B cell (primary cell): ENCODE measurements at regions of chr4 and their contacts with region 1.

Region 1: DNA sequence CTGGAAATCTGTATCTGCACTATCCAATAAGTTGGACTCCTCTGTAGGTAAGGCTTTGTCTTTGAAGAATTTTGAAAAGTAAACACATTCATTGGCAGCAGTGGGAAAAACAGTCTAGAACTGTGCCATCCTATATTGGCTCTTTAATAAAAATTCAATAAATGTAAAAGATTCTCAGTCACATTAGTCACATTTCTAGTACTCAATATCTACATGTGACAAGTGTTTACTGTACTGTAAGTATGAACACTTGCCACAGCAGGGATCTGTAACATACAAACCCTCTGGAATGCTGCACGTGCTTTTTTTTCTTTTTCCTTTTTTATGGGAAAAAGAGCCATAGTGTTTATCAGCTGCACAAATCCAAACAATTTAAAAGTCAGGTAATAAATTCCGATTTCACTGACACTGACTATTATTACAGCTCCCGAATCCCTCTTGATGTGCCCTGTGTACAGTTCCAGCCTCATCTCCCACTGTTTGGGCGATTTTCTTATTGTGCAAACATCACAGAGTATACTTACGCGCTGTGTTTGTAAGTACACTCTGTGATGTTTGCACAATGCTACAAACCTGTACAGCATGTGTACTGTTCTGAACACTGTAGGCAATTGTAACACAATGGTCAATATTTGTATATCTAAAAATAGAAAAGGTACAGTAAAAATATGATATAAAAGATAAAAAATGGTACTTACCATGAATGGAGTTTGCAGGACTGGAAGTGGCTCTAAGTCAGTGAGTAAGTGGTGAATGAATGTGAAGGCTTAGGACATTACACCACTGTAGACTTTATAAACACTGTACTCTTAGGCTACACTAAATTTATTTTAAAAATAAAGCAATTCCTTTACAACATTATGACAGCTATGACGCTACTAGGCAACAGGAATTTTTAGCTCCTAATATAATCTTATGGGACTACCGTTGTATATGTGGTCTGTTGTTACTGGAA is 8.7 kb downstream of the PYURF start:
- DNase-seq: no peak
- ATAC-seq: no peak
- H3K4me3 ChIP-seq: no peak overlapping the region
- H3K4me3 Mint-ChIP-seq: no peak overlapping the region
- H3K27ac ChIP-seq: no peak overlapping the region
- H3K27ac Mint-ChIP-seq: no peak overlapping the region
- H3K4me1 ChIP-seq: no peaks in the 10 kb centered on the region
- H3K4me1 Mint-ChIP-seq: no peaks in the 10 kb centered on the region
- H3K27me3 ChIP-seq: no peaks in the 10 kb centered on the region
- H3K27me3 Mint-ChIP-seq: peaks cover 3% of the 10 kb centered on the region
- CTCF ChIP-seq: no peak

Region 2: GRCh38 chr4:87679449-87680169 is 835.2 kb before region 1 on chr4:
- CTCF ChIA-PET with region 1: interaction called, 3 read pairs
- POLR2A ChIA-PET with region 1: no interaction called
- intact Hi-C with region 1: loop called (anchors 5 kb)
- DNase-seq: peak; percentile 41
- ATAC-seq: no peak
- H3K4me3 ChIP-seq: no peak overlapping the region
- H3K4me3 Mint-ChIP-seq: no peak overlapping the region
- H3K27ac ChIP-seq: no peak overlapping the region
- H3K27ac Mint-ChIP-seq: no peak overlapping the region
- H3K4me1 ChIP-seq: no peaks in the 10 kb centered on the region
- H3K4me1 Mint-ChIP-seq: peaks cover 2% of the 10 kb centered on the region
- H3K27me3 ChIP-seq: no peaks in the 10 kb centered on the region
- H3K27me3 Mint-ChIP-seq: no peaks in the 10 kb centered on the region
- CTCF ChIP-seq: peak; percentile 86

Region 3: GRCh38 chr4:88033309-88033708 is 481.5 kb before region 1 on chr4:
- CTCF ChIA-PET with region 1: interaction called, 40 read pairs
- POLR2A ChIA-PET with region 1: no interaction called
- intact Hi-C with region 1: loop called (anchors 1 kb)
- DNase-seq: peak; percentile 64
- ATAC-seq: peak; percentile 43
- H3K4me3 ChIP-seq: no peak overlapping the region
- H3K4me3 Mint-ChIP-seq: no peak overlapping the region
- H3K27ac ChIP-seq: no peak overlapping the region
- H3K27ac Mint-ChIP-seq: no peak overlapping the region
- H3K4me1 ChIP-seq: no peaks in the 10 kb centered on the region
- H3K4me1 Mint-ChIP-seq: no peaks in the 10 kb centered on the region
- H3K27me3 ChIP-seq: no peaks in the 10 kb centered on the region
- H3K27me3 Mint-ChIP-seq: no peaks in the 10 kb centered on the region
- CTCF ChIP-seq: peak; percentile 71

Region 4: GRCh38 chr4:88369936-88370335 is 144.9 kb before region 1 on chr4:
- CTCF ChIA-PET with region 1: interaction called, 27 read pairs
- POLR2A ChIA-PET with region 1: no interaction called
- intact Hi-C with region 1: loop called (anchors 1 kb)
- DNase-seq: no peak
- ATAC-seq: no peak
- H3K4me3 ChIP-seq: no peak overlapping the region
- H3K4me3 Mint-ChIP-seq: no peak overlapping the region
- H3K27ac ChIP-seq: no peak overlapping the region
- H3K27ac Mint-ChIP-seq: no peak overlapping the region
- H3K4me1 ChIP-seq: no peaks in the 10 kb centered on the region
- H3K4me1 Mint-ChIP-seq: no peaks in the 10 kb centered on the region
- H3K27me3 ChIP-seq: no peaks in the 10 kb centered on the region
- H3K27me3 Mint-ChIP-seq: peaks cover 2% of the 10 kb centered on the region
- CTCF ChIP-seq: no peak

Region 5: GRCh38 chr4:88503344-88503743 is 11.5 kb before region 1 on chr4:
- CTCF ChIA-PET with region 1: interaction called, 31 read pairs
- POLR2A ChIA-PET with region 1: interaction called, 11 read pairs
- intact Hi-C with region 1: no loop called
- DNase-seq: no peak
- ATAC-seq: no peak
- H3K4me3 ChIP-seq: no peak overlapping the region
- H3K4me3 Mint-ChIP-seq: no peak overlapping the region
- H3K27ac ChIP-seq: no peak overlapping the region
- H3K27ac Mint-ChIP-seq: no peak overlapping the region
- H3K4me1 ChIP-seq: no peaks in the 10 kb centered on the region
- H3K4me1 Mint-ChIP-seq: no peaks in the 10 kb centered on the region
- H3K27me3 ChIP-seq: no peaks in the 10 kb centered on the region
- H3K27me3 Mint-ChIP-seq: no peaks in the 10 kb centered on the region
- CTCF ChIP-seq: no peak

Region 6: DNA sequence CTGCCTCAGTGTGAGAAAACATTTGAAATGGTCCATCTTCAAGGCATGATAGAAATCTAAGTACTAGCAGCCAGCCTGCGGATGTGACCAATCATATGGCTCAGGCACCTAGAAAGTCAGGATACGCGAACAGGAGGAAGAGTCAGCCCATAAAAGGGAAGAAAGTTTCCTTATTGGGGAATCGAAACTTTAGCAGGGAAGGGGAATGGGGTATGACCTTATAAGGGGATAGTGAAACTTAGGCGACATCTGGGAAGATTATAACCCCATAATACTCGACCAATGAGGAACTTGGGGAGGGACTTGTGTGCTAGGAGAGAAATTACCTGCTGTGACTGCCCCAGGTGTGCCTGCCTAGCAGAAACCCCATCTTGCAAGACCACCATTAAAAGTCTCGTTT is 35.0 kb after region 1 on chr4:
- CTCF ChIA-PET with region 1: no interaction called
- POLR2A ChIA-PET with region 1: no interaction called
- intact Hi-C with region 1: no loop called
- DNase-seq: no peak
- ATAC-seq: no peak
- H3K4me3 ChIP-seq: no peak overlapping the region
- H3K4me3 Mint-ChIP-seq: no peak overlapping the region
- H3K27ac ChIP-seq: no peak overlapping the region
- H3K27ac Mint-ChIP-seq: no peak overlapping the region
- H3K4me1 ChIP-seq: no peaks in the 10 kb centered on the region
- H3K4me1 Mint-ChIP-seq: no peaks in the 10 kb centered on the region
- H3K27me3 ChIP-seq: no peaks in the 10 kb centered on the region
- H3K27me3 Mint-ChIP-seq: peaks cover 3% of the 10 kb centered on the region
- CTCF ChIP-seq: no peak